ENCODE measurements at regions of chrX and their contacts with region 1.

Region 1: GRCh38 chrX:1580735-1581531 is 10.5 kb upstream of the AKAP17A start:
- DNase-seq: peak; percentile 32
- H3K4me3 ChIP-seq: no peak overlapping the region
- H3K27ac ChIP-seq: no peak overlapping the region
- H3K4me1 ChIP-seq: no peaks in the 10 kb centered on the region
- H3K27me3 ChIP-seq: no peaks in the 10 kb centered on the region
- CTCF ChIP-seq: peak; percentile 67 to 72

Region 2: GRCh38 chrX:1468250-1468772 is 112.6 kb before region 1 on chrX:
- CTCF ChIA-PET with region 1: no interaction called
- dilution Hi-C with region 1: no loop called
- in situ Hi-C with region 1: loop called in 1 of 2 experiments (anchors 10 kb)
- intact Hi-C with region 1: no loop called
- DNase-seq: peak; percentile 80
- H3K4me3 ChIP-seq: no peak overlapping the region
- H3K27ac ChIP-seq: no peak overlapping the region
- H3K4me1 ChIP-seq: no peaks in the 10 kb centered on the region
- H3K27me3 ChIP-seq: peaks cover 5% of the 10 kb centered on the region
- CTCF ChIP-seq: no peak

Region 3: GRCh38 chrX:1507511-1508463 is 73.1 kb before region 1 on chrX:
- CTCF ChIA-PET with region 1: no interaction called
- dilution Hi-C with region 1: no loop called
- in situ Hi-C with region 1: no loop called
- intact Hi-C with region 1: no loop called
- DNase-seq: peak; percentile 15
- H3K4me3 ChIP-seq: no peak overlapping the region
- H3K27ac ChIP-seq: no peak overlapping the region
- H3K4me1 ChIP-seq: no peaks in the 10 kb centered on the region
- H3K27me3 ChIP-seq: no peaks in the 10 kb centered on the region
- CTCF ChIP-seq: no peak

Region 4: DNA sequence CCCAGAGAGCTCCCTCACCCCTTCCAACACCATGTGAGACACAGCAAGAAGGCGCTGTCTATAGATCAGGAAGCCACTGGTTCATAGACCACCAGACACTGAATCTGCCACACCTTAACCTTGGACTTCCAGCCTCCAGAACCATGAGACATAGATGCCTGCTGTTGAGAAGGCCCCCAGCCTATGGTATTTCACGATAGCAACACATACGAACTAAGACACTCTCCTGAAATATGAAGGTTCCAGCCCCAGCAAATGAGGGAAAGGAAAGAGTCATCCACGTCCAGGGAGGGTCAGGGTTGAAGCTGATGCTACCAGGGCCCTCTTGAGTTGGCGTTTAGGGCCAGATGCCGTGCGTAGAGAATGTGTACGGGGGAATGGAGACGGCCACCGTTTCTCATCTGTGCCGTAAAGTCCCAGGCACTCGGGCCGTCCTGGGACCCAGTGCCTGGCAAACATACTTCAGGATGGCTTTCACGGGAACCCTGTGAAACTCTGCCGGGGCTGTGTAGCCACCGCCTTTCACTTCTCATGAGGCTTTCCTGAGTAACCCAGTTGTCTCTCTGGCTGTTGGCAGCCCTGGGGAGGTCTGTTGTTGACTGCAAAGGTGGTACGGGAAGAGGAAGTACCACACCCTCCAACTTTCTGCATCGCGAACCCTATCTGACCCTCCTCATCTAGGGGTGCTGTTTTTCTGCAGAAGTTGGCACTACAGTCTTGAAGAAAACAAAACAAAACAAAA is 26.3 kb before region 1 on chrX:
- CTCF ChIA-PET with region 1: no interaction called
- dilution Hi-C with region 1: no loop called
- in situ Hi-C with region 1: no loop called
- intact Hi-C with region 1: no loop called
- DNase-seq: no peak
- H3K4me3 ChIP-seq: no peak overlapping the region
- H3K27ac ChIP-seq: no peak overlapping the region
- H3K4me1 ChIP-seq: no peaks in the 10 kb centered on the region
- H3K27me3 ChIP-seq: no peaks in the 10 kb centered on the region
- CTCF ChIP-seq: no peak